Testis (tissue), 5 donors: ENCODE measurements at regions of chr3 and their contacts with region 1.

Region 1: GRCh38 chr3:10945683-10946287 is 46.8 kb upstream of the SLC6A1 start:
- DNase-seq: peak; percentile 85
- H3K4me3 ChIP-seq: no peak overlapping the region
- H3K27ac ChIP-seq: no peak overlapping the region
- H3K4me1 ChIP-seq: peaks cover 12% of the 10 kb centered on the region
- H3K27me3 ChIP-seq: no peaks in the 10 kb centered on the region
- CTCF ChIP-seq: peak; percentile 70 to 97 (median 86)
- POLR2A ChIP-seq: no peak

Region 2: GRCh38 chr3:10758304-10759061 is 187.3 kb before region 1 on chr3:
- intact Hi-C with region 1: loop called (anchors 5 kb)
- DNase-seq: peak; percentile 70
- H3K4me3 ChIP-seq: no peak overlapping the region
- H3K27ac ChIP-seq: no peak overlapping the region
- H3K4me1 ChIP-seq: no peaks in the 10 kb centered on the region
- H3K27me3 ChIP-seq: no peaks in the 10 kb centered on the region
- CTCF ChIP-seq: peak; percentile 63 to 78 (median 68)
- POLR2A ChIP-seq: no peak